Activated CD4-positive, alpha-beta T cell treated with anti-CD3 and anti-CD28 coated beads, Interleukin-2, amount 10 ng/mL, durations not matched to agents 24 days and 14 days (primary cell): ENCODE measurements at regions of chr1 and their contacts with region 1.

Region 1: GRCh38 chr1:59926381-59927123 is at the start of gene CYP2J2:
- DNase-seq: peak; percentile 80
- H3K4me3 Mint-ChIP-seq: peak within 1 kb of the TSS; percentile 89
- H3K27ac Mint-ChIP-seq: peak within 1 kb of the TSS; percentile 47
- H3K4me1 Mint-ChIP-seq: peaks cover 15% of the 10 kb centered on the region
- H3K27me3 Mint-ChIP-seq: peaks cover 38% of the 10 kb centered on the region
- total RNA-seq, gene CYP2J2: 0.49 and 0.78 TPM in 2 replicates

Region 2: GRCh38 chr1:59814901-59815825 is 111.4 kb before region 1 on chr1 and contains the start of gene HOOK1:
- intact Hi-C with region 1: loop called (anchors 5 kb)
- DNase-seq: no peak
- H3K4me3 Mint-ChIP-seq: no peak within 1 kb of the TSS
- H3K27ac Mint-ChIP-seq: peak within 1 kb of the TSS; percentile 78
- H3K4me1 Mint-ChIP-seq: peaks cover 5% of the 10 kb centered on the region
- H3K27me3 Mint-ChIP-seq: peaks cover 18% of the 10 kb centered on the region
- total RNA-seq, gene HOOK1: 1.6 and 2.1 TPM in 2 replicates